ENCODE measurements at regions of chr2 and their contacts with region 1.

Region 1: DNA sequence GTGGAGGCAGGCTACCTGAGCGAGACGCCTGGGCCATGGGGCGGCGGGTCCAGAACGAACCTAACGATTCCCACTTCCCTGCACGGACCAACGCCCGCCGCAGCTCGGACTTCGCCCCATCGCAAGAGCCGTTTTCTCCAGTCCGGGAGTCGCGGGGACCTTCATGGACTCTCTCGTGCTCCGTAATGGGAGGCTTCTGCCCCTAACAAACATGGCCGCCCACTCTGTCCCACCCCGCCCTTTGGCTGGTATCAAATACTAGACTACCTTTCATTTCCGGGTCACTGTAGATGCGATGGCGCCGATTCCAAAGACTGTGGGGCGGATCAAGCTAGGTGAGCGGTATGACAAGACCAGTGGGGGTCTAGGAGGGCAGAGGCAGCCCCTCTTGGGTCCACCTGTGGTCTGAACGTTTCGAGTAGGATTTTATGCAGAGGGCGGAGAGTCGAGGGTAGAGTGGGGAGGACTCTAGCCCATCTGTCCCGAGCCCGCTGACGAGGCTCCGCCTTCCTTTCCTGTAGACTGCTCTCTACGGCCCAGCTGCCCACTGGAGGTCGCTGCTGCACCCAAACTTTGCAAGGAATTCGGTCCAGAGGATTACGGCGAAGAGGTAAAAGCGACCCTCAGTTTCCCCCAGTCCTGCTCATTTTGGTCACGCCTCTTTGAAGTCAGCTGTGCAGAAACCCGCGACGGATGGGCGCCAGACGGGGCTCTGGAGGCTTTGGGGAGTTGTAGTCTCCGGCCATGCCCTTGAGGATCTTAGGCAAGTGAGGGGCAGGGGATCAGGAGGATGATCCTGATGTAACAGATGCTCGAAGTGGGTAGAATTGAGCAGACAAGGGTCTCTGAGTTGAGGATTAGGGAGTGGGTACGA is at the starts of genes CCDC142 and TTC31:
- DNase-seq: peak; percentile 97
- H3K4me3 ChIP-seq: peak within 1 kb of the TSS; percentile 6 to 79 (median 66)
- H3K27ac ChIP-seq: peak within 1 kb of the TSS; percentile 36
- H3K4me1 ChIP-seq: peaks cover 13% of the 10 kb centered on the region
- H3K27me3 ChIP-seq: no peaks in the 10 kb centered on the region
- CTCF ChIP-seq: peak; percentile 89 to 93
- POLR2A ChIP-seq: peak; percentile 55
- total RNA-seq, gene CCDC142: 20.3 and 23.8 TPM in 2 replicates
- total RNA-seq, gene TTC31: 20.1 and 21.8 TPM in 2 replicates

Region 2: DNA sequence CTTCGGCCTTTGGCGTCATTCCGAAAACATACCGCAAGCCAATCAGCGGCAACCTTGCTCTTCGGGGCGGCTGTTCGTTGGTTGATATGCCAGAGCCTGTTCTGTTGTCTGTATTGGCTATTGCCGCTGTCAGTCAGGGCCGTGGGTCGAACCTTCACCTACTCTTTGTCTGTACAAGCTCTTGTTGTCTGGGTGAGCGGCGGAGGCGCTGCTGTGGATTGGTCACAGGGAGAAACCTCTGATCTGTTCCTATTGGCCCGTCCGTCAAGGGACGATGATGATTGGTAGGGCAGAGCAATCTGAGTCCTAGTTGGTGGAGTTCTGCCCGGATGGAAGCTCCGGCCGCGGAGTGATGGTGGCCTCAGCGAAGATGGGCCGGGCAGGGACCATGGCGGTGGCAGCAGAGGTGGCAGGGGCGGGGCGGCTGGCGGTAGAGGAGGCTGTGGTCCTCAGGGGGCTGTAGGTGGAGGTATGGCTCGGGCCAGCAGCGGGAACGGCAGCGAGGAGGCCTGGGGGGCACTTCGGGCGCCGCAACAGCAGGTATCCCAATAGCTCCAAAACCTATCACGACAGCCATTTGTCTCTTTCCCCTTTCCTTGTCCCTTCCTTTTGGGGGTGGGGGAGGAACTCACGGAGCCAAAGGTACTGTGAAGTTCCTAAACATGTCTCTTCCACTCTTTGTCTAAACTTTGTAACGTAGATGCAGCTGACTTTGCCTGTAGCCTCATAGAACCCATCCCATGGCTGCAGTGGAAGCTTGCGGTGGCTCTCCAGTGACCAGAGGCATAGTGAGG is 24.7 kb before region 1 on chr2 and contains the start of gene WBP1:
- CTCF ChIA-PET with region 1: interaction called, 15 read pairs
- POLR2A ChIA-PET with region 1: no interaction called
- dilution Hi-C with region 1: no loop called
- intact Hi-C with region 1: loop called (anchors 1 kb)
- DNase-seq: peak; percentile 100
- H3K4me3 ChIP-seq: peak within 1 kb of the TSS; percentile 80 to 87 (median 82)
- H3K27ac ChIP-seq: peak within 1 kb of the TSS; percentile 51
- H3K4me1 ChIP-seq: peaks cover 22% of the 10 kb centered on the region
- H3K27me3 ChIP-seq: peaks cover 0 to under 1% of the 10 kb centered on the region in 2 experiments
- CTCF ChIP-seq: no peak
- POLR2A ChIP-seq: peak; percentile 66
- total RNA-seq, gene WBP1: 44.5 and 50.5 TPM in 2 replicates

Region 3: DNA sequence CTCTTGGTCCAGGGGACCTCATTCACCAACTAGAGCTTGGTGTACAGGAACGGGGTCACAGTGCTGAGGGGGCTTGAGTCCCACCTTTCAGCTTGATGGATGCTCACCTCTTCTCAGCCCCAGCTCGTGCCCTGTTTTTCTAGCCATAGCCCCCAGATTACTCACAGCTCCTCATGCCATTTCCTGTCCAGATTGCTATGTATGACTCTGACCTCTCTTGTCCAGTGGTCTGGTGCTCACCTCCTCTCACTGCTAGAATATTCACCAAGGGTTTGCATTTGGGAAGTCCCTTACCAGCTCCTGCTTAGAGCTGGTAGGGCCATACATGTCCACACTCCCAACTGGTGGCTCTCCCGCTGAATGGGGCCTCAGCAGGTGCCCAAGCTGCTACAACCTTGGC is 10.5 kb after region 1 on chr2:
- CTCF ChIA-PET with region 1: interaction called, 11 read pairs
- POLR2A ChIA-PET with region 1: no interaction called
- dilution Hi-C with region 1: no loop called
- intact Hi-C with region 1: loop called (anchors 1 kb)
- DNase-seq: no peak
- H3K4me3 ChIP-seq: no peak overlapping the region
- H3K27ac ChIP-seq: no peak overlapping the region
- H3K4me1 ChIP-seq: peaks cover 13% of the 10 kb centered on the region
- H3K27me3 ChIP-seq: peaks cover 10 to 16% of the 10 kb centered on the region in 2 experiments
- CTCF ChIP-seq: no peak
- POLR2A ChIP-seq: no peak

Region 4: GRCh38 chr2:74507145-74507925 is 24.3 kb after region 1 on chr2 and contains the start of gene PCGF1:
- CTCF ChIA-PET with region 1: interaction called, 15 read pairs
- POLR2A ChIA-PET with region 1: no interaction called
- dilution Hi-C with region 1: no loop called
- intact Hi-C with region 1: loop called (anchors 1 kb)
- DNase-seq: peak; percentile 98
- H3K4me3 ChIP-seq: peak within 1 kb of the TSS; percentile 3 to 75 (median 37)
- H3K27ac ChIP-seq: peak within 1 kb of the TSS; percentile 54
- H3K4me1 ChIP-seq: peaks cover 27% of the 10 kb centered on the region
- H3K27me3 ChIP-seq: peaks cover 31 to 40% of the 10 kb centered on the region in 2 experiments
- CTCF ChIP-seq: peak; percentile 41 to 81
- POLR2A ChIP-seq: peak; percentile 75
- total RNA-seq, gene PCGF1: 17.4 and 21.0 TPM in 2 replicates

Region 5: DNA sequence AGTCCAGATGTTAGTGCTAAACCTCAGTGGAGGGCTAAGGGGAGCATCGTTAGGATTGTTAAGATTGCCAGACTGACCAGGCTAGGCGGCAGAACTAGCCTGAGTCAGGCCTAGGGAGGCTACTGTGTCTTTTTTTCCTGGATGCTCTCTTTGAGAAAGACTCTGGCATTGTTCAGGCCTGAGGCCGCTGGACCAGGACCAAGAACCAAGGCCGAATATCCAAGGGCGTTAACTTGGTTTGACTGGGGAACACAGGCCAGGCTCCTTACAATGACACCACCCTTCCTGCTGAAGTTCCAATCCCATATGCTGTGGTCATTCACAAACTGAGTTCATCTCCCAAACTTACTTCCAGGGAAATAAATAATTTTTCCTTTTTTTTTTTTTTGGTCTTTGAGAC is 57.3 kb after region 1 on chr2:
- CTCF ChIA-PET with region 1: no interaction called
- POLR2A ChIA-PET with region 1: no interaction called
- dilution Hi-C with region 1: no loop called
- intact Hi-C with region 1: no loop called
- DNase-seq: no peak
- H3K4me3 ChIP-seq: no peak overlapping the region
- H3K27ac ChIP-seq: no peak overlapping the region
- H3K4me1 ChIP-seq: no peaks in the 10 kb centered on the region
- H3K27me3 ChIP-seq: peaks cover 16 to 21% of the 10 kb centered on the region in 2 experiments
- CTCF ChIP-seq: no peak
- POLR2A ChIP-seq: no peak

Region 6: GRCh38 chr2:74587664-74588277 is 104.7 kb after region 1 on chr2:
- CTCF ChIA-PET with region 1: interaction called, 72 read pairs
- POLR2A ChIA-PET with region 1: no interaction called
- dilution Hi-C with region 1: no loop called
- intact Hi-C with region 1: loop called (anchors 1 kb)
- DNase-seq: peak; percentile 73
- H3K4me3 ChIP-seq: no peak overlapping the region
- H3K27ac ChIP-seq: no peak overlapping the region
- H3K4me1 ChIP-seq: no peaks in the 10 kb centered on the region
- H3K27me3 ChIP-seq: peaks cover 21 to 38% of the 10 kb centered on the region in 2 experiments
- CTCF ChIP-seq: peak; percentile 51 to 54
- POLR2A ChIP-seq: no peak

Measured in endothelial cell of umbilical vein (primary cell).